Esophagus muscularis mucosa (tissue), 4 donors: ENCODE measurements at regions of chr5 and their contacts with region 1.

Region 1: DNA sequence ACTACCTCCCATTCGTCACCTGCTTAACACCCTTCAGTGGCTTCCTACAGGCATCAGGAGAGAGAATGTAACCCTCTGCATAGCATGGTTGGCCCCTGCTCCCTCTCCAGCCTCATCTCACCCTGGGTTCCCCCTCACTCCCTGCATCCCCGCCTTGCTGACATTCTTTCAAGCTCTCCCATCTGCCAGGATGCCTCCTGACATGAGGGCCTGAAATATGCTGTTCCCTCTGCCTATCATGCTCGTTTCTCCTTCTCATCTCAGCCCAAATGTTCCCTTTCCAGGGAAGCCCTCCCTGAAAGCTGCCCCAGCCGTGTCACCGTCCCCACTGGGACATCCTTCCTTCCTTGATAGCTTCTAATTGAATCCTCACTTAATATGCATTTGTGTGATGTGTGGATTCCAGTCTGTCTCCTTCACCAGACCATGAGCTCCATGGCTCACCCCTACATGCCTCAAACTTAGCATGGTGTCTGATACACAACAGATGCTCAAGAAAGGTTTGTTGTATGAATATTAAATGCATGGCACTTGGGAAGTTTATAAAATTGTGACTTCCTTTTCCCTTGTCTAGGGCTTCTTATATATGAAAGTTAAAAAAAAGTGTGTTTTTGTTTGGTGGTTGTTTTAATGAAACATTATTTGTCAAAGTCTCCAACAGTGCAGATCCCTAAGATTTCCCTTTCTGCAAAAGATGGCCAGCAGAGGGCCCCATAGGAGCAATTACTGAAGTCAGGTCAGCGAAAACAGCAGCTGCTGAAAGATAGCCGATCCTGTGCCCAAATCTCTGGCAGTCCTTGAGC is 7.3 kb upstream of the C5orf58 start:
- DNase-seq: peak; percentile 96
- H3K4me3 ChIP-seq: no peak overlapping the region
- H3K27ac ChIP-seq: peak overlapping the region in 1 of 4 donors; percentile 27
- H3K4me1 ChIP-seq: peaks cover 0 to 59% (median 47%) of the 10 kb centered on the region in 4 donors
- H3K27me3 ChIP-seq: no peaks in the 10 kb centered on the region
- CTCF ChIP-seq: peak; percentile 73 to 84 (median 81)
- EP300 ChIP-seq: no peak
- POLR2A ChIP-seq: no peak

Region 2: DNA sequence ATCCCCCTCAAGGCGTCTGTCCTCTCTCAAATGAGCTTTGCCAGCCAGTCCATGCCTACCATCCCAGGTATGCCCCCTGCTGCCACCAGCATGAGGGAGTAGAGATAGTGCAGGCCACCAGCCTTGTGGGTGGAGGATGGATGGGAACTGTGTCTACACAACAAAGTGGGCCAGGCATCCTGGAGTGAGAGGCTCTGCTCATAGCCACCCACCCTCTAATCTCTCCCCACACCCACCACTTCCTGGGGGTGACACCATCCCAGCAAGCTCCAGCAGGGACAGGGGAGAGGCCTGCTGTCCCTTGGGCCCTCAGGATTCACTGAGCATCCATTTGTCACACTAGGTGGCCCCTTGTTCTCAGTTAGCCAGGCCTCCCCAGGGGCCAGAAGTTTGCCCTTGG is 145.3 kb before region 1 on chr5:
- intact Hi-C with region 1: no loop called
- DNase-seq: no peak
- H3K4me3 ChIP-seq: no peak overlapping the region
- H3K27ac ChIP-seq: no peak overlapping the region
- H3K4me1 ChIP-seq: no peaks in the 10 kb centered on the region
- H3K27me3 ChIP-seq: peaks cover 0 to 18% (median 0%) of the 10 kb centered on the region in 4 donors
- CTCF ChIP-seq: no peak
- EP300 ChIP-seq: no peak
- POLR2A ChIP-seq: no peak

Region 3: DNA sequence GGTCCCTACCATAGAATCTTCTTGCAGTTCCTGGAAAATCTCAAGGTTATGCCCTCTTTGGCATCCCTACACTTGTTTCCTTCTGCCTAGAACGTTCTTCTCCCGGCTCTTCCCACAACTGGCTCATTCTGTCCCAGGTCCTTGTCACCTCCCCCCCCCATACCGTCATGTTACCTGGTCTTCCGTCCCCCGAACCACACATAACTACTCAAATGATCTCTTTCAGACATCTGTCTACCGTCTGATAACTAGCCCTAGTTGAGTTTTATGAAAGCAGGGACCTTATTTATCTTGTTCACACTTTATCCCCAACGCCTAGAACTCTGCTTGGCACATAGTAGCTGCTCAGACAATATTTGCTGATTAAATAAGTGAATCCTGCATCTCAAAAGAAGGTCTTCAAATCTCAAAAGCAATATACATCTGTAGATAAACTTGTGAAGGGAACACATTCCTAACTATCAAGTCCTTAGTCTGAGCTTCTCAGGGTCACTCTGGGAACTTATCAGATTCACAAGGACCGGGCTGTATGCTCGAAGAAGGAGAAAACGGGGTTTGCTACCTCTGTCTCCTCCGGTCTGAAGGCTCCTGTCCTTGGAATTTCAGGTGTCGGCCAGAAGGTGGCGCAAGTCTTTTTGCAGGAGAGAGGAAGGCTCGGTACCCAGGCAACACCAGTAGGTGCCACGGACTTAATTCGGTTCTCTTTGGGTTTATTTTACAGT is 42.1 kb after region 1 on chr5:
- intact Hi-C with region 1: loop called (anchors 5 kb)
- DNase-seq: no peak
- H3K4me3 ChIP-seq: peak overlapping the region in 3 of 4 donors; percentile 22 to 31 (median 27)
- H3K27ac ChIP-seq: peak overlapping the region in 2 of 4 donors; percentile 51 to 58
- H3K4me1 ChIP-seq: peaks cover 8 to 39% (median 31%) of the 10 kb centered on the region in 4 donors
- H3K27me3 ChIP-seq: peaks cover 0 to 6% (median 0%) of the 10 kb centered on the region in 4 donors
- CTCF ChIP-seq: peak; percentile 86 to 88 (median 88)
- EP300 ChIP-seq: no peak
- POLR2A ChIP-seq: no peak

Region 4: GRCh38 chr5:170302653-170303501 is 77.3 kb after region 1 on chr5:
- intact Hi-C with region 1: no loop called
- DNase-seq: no peak
- H3K4me3 ChIP-seq: no peak overlapping the region
- H3K27ac ChIP-seq: peak overlapping the region in 2 of 4 donors; percentile 26 to 40
- H3K4me1 ChIP-seq: peaks cover 22 to 35% (median 28%) of the 10 kb centered on the region in 4 donors
- H3K27me3 ChIP-seq: no peaks in the 10 kb centered on the region
- CTCF ChIP-seq: no peak
- EP300 ChIP-seq: no peak
- POLR2A ChIP-seq: no peak